ENCODE measurements at regions of chr17 and their contacts with region 1.

Region 1: GRCh38 chr17:78112518-78113226 is 15.9 kb downstream of the TMC6 start:
- DNase-seq: peak in 1 of 2 donors; percentile 75
- H3K4me3 ChIP-seq: no peak overlapping the region
- H3K27ac ChIP-seq: no peak overlapping the region
- H3K4me1 ChIP-seq: no peaks in the 10 kb centered on the region
- H3K27me3 ChIP-seq: no peaks in the 10 kb centered on the region
- CTCF ChIP-seq: peak; percentile 95 to 98 (median 96)
- POLR2A ChIP-seq: no peak

Region 2: DNA sequence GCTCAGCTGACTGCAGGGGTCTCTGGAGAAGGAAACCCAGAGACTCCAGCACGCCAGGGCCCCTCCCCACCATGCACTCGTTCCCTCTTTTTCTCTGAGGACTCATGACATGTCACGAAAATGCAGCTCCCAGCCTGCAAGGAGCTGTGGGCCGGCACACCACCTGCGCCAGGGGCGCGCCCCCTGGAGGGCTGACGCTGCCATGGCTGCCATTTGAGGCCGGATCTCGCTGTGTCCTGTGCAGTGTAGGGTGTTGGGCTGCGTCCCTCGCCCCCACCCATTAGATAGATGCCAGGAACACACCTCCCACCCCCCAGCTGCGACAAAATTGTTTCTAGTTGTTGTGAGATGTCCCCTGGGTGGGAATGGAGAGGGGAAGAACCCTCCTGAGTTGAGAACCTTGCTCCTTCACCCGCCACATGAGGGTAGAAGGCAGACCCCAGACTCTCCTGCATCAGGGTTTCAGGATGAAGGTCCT is 63.9 kb after region 1 on chr17:
- intact Hi-C with region 1: loop called (anchors 10 kb)
- DNase-seq: no peak
- H3K4me3 ChIP-seq: no peak overlapping the region
- H3K27ac ChIP-seq: peak overlapping the region; percentile 34 to 91
- H3K4me1 ChIP-seq: peaks cover 5 to 16% of the 10 kb centered on the region in 2 donors
- H3K27me3 ChIP-seq: no peaks in the 10 kb centered on the region
- CTCF ChIP-seq: peak; percentile 56 to 78 (median 66)
- POLR2A ChIP-seq: no peak

Region 3: GRCh38 chr17:78250891-78251794 is 138.5 kb after region 1 on chr17:
- intact Hi-C with region 1: loop called (anchors 5 kb)
- DNase-seq: peak; percentile 73 to 85
- H3K4me3 ChIP-seq: peak overlapping the region in 1 of 3 donors; percentile 52
- H3K27ac ChIP-seq: no peak overlapping the region
- H3K4me1 ChIP-seq: peaks cover 0 to 4% of the 10 kb centered on the region in 2 donors
- H3K27me3 ChIP-seq: no peaks in the 10 kb centered on the region
- CTCF ChIP-seq: peak; percentile 82 to 99 (median 99)
- POLR2A ChIP-seq: no peak

Measured in breast epithelium (tissue), 4 donors.